Heart left ventricle (tissue), 16 donors: ENCODE measurements at regions of chr9 and their contacts with region 1.

Region 1: GRCh38 chr9:86202338-86202882 is 57.0 kb downstream of the C9orf153 start:
- DNase-seq: no peak
- ATAC-seq: peak; percentile 54 to 78 (median 64)
- H3K4me3 ChIP-seq: no peak overlapping the region
- H3K27ac ChIP-seq: no peak overlapping the region
- H3K4me1 ChIP-seq: peaks cover 0 to 14% (median 0%) of the 10 kb centered on the region in 12 donors
- H3K27me3 ChIP-seq: no peaks in the 10 kb centered on the region
- CTCF ChIP-seq: peak; percentile 66 to 88 (median 82)
- POLR2A ChIP-seq: no peak

Region 2: DNA sequence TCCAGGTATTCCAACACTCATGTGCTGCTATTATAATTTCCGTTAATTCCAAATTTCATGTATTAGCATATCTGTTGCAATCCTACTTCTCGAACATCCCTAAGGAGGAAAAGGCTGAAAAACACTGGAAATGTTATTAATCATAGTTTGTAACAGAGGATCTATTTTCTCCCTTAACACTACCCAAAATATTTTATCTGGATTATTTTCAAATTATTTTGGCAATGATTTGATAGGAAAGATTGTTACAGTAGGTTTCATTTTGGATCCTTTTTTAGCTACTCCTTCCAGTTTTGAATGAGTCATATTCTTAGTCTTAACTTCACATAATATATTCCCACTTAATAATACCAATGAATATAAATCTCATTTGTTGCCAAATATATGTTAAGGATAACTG is 275.3 kb before region 1 on chr9:
- intact Hi-C with region 1: loop called in 1 of 10 experiments (anchors 5 kb)
- DNase-seq: no peak
- ATAC-seq: peak in 2 of 4 donors; percentile 42 to 63
- H3K4me3 ChIP-seq: no peak overlapping the region
- H3K27ac ChIP-seq: no peak overlapping the region
- H3K4me1 ChIP-seq: peaks cover 0 to 5% (median 0%) of the 10 kb centered on the region in 12 donors
- H3K27me3 ChIP-seq: no peaks in the 10 kb centered on the region
- CTCF ChIP-seq: no peak
- POLR2A ChIP-seq: no peak

Region 3: DNA sequence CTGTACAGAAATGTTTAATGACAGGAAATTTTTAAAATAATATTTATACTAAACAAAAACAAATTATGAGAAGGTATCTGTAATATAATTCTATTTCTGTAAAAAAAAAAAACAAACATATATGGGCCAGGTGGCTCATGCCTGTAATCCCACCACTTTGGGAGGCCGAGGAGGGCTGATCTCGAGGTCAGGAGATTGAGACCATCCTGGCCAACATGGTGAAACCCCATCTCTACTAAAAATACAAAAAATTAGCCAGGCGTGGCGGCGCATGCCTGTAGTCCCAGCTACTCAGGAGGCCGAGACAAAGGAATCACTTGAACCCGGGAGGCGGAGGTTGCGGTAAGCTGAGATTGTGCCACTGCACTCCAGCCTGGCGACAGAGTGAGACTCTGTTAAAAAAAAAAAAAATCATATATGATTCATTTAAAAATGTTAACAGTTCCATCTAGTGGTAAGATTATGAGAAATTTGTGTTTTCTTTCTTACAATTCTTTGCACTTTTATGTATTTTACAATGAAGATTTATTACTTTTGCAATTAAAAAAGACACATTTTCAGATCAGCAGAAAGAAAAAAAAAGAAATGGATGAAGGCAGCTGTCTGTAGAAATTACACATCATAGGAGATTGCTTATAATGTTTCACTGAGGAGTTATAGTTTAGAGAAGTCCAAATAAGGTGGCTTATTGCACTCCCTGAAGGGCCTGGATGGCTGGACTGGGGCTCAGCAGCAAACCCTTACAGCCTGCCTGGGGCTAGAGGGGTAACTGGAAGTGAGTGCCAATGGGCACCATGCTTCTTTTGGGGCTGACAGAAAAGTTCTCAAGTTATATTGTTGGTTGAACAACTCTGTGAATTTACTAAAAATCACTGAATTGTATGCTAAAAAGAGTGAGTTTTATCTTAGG is 36.7 kb after region 1 on chr9:
- intact Hi-C with region 1: loop called in 2 of 10 experiments (anchors 5 kb)
- DNase-seq: no peak
- ATAC-seq: no peak
- H3K4me3 ChIP-seq: no peak overlapping the region
- H3K27ac ChIP-seq: no peak overlapping the region
- H3K4me1 ChIP-seq: peaks cover 0 to 15% (median 0%) of the 10 kb centered on the region in 12 donors
- H3K27me3 ChIP-seq: no peaks in the 10 kb centered on the region
- CTCF ChIP-seq: peak in 3 of 12 donors; percentile 6 to 20 (median 7)
- POLR2A ChIP-seq: no peak

Region 4: GRCh38 chr9:86257391-86257790 is 55.0 kb after region 1 on chr9:
- intact Hi-C with region 1: loop called in 1 of 10 experiments (anchors 10 kb)
- DNase-seq: peak in 2 of 5 donors; percentile 34 to 52
- ATAC-seq: peak in 3 of 4 donors; percentile 59 to 76 (median 60)
- H3K4me3 ChIP-seq: no peak overlapping the region
- H3K27ac ChIP-seq: no peak overlapping the region
- H3K4me1 ChIP-seq: peaks cover 0 to 6% (median 0%) of the 10 kb centered on the region in 12 donors
- H3K27me3 ChIP-seq: no peaks in the 10 kb centered on the region
- CTCF ChIP-seq: no peak
- POLR2A ChIP-seq: no peak

Region 5: GRCh38 chr9:86275962-86276361 is 73.6 kb after region 1 on chr9:
- intact Hi-C with region 1: loop called in 2 of 10 experiments (anchors 2 to 10 kb)
- DNase-seq: no peak
- ATAC-seq: no peak
- H3K4me3 ChIP-seq: no peak overlapping the region
- H3K27ac ChIP-seq: no peak overlapping the region
- H3K4me1 ChIP-seq: peaks cover 0 to 62% (median 49%) of the 10 kb centered on the region in 12 donors
- H3K27me3 ChIP-seq: no peaks in the 10 kb centered on the region
- CTCF ChIP-seq: peak in 5 of 12 donors; percentile 15 to 38 (median 26)
- POLR2A ChIP-seq: no peak

Region 6: DNA sequence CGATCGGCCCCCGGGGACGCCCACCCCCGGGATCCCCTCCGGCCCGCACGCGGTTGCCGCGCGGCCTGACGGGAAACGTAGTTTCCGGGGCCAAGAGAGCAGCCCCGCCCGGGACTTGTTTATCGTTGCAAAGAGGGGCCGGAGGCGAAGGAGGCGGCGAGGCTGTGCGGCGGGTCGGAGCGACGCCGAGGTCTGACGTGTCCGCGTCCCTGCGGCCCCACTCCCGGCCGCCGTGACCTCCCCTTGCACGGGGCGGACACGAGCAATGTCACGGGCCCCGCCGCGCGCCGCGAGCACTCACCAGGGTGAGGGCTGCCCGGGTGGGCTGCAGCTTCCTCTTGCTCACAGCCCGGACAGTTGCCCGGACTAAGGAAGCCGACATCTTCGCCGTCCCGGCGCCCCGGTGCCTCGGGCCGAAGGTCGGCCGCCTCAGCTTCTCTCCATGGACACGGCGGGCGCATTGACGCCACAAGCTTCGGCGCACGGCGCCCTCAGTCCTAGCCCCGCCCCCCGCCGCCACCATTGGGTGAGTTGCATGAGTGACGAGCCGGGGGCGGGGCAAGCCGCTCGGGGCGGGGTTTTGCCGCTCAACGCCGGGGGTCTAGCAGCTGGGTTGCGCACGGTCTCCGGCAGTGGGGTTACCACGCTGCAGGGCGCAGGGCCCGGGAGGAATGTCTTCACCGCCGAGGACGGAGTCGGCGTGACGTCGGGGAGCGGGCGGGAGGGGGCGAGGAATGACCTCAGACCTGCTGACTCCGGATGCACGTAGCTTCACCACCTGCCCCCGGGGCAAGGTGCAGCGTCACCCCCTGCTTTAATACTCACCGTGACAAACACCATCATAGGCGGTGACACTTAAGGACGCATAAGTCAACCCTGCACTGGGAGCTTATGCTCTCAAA is 79.9 kb after region 1 on chr9 and contains the start of gene ISCA1:
- intact Hi-C with region 1: loop called in 1 of 10 experiments (anchors 10 kb)
- DNase-seq: peak; percentile 97 to 99 (median 98)
- ATAC-seq: peak; percentile 94 to 97 (median 97)
- H3K4me3 ChIP-seq: peak within 1 kb of the TSS; percentile 57 to 98 (median 88)
- H3K27ac ChIP-seq: peak within 1 kb of the TSS; percentile 91 to 99 (median 97)
- H3K4me1 ChIP-seq: peaks cover 0 to 44% (median 34%) of the 10 kb centered on the region in 12 donors
- H3K27me3 ChIP-seq: no peaks in the 10 kb centered on the region
- CTCF ChIP-seq: no peak
- POLR2A ChIP-seq: peak; percentile 64 to 95
- total RNA-seq, gene ISCA1: 47.1 to 104 (median 72.6) TPM